ENCODE measurements at regions of chr18 and their contacts with region 1.

Region 1: DNA sequence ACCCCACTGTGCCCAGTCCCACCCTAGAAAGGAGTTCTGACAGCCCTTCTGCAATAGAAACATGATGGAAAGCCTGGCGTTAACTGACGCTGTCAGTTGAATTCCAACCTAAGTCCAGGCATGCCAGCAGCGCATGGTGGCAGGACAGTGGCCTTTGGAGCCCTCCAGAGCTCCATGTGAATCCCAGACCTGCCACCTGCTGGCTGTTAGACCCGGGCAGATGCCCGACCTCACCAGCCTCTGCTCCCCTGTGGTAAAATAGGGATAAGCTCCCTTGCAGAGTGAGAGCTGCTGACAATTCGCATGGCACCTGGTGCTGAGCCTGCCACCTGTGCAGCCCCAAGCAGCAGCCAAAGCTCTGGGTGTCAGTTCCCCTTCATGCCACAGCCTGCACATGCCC is 138.6 kb downstream of the LOXHD1 start:
- DNase-seq: peak; percentile 61
- H3K4me3 ChIP-seq: no peak overlapping the region
- H3K27ac ChIP-seq: no peak overlapping the region
- H3K4me1 ChIP-seq: no peaks in the 10 kb centered on the region
- H3K27me3 ChIP-seq: no peaks in the 10 kb centered on the region
- CTCF ChIP-seq: peak; percentile 22; the same call in 1 of the 2 replicates
- EP300 ChIP-seq: no peak
- RAD21 ChIP-seq: peak; percentile 72

Region 2: DNA sequence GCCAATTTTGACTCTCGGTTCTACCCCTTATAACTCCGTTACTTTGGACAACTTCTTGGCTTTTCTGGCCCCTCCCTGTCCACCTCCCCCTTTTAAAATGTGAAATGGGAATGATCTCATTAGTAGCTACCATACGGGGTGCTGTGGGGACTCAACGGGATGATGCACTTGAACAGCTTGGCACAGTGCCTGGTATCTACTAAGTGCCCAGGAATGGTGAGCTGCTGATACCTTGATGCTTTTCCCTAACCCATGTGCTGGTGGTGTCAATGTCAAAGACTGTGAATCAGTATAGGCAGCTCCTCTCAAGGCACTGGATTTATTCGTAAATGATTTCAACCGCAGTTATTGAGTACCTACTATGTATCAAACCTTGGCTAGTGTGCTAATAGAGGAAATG is 65.6 kb before region 1 on chr18:
- CTCF ChIA-PET with region 1: no interaction called
- POLR2A ChIA-PET with region 1: no interaction called
- DNase-seq: no peak
- H3K4me3 ChIP-seq: no peak overlapping the region
- H3K27ac ChIP-seq: no peak overlapping the region
- H3K4me1 ChIP-seq: no peaks in the 10 kb centered on the region
- H3K27me3 ChIP-seq: no peaks in the 10 kb centered on the region
- CTCF ChIP-seq: no peak
- EP300 ChIP-seq: no peak
- RAD21 ChIP-seq: no peak

Region 3: DNA sequence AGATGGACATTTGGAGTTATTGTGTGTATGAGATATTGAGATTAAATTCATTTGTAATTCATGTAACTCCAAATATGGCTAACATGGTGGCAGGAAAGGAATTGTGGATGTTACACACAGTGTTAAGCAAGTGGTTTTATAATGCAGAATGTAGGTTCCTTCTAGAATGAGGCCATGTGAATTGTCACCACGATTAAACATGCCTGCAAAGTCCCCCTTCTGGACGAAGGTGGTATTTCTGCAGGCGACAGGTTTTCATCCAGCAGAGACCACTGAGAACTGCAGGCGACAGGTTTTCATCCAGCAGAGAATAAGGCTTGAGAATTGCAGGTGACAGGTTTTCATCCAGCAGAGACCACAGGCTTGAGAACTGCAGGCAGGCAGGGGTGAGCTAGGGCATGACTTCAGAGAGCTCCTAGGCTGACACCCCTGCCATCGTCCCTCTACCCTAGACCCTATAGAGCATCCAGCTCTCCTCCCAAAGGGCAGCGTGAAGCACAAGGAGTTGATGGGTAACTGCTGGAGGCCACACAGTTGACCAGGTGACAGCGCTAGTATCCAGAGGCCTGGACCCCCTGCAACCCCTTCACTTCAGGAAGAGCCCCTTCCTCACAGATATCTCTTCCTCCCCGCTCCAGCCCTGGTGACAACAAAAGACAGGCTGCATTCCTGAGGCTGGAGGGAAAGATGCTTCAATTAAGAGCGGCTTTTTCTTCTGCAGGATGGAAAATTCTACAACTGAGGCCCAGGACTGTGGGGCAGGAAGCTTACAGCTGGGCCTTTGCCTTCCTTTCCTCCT is 37.2 kb before region 1 on chr18:
- CTCF ChIA-PET with region 1: interaction called, 11 read pairs
- POLR2A ChIA-PET with region 1: no interaction called
- DNase-seq: peak; percentile 64
- H3K4me3 ChIP-seq: no peak overlapping the region
- H3K27ac ChIP-seq: peak overlapping the region in 1 of 2 experiments; percentile 59; a peak in 2 of 4 replicates
- H3K4me1 ChIP-seq: peaks cover 7 to 9% of the 10 kb centered on the region in 2 experiments; a peak in 2 of 4 replicates
- H3K27me3 ChIP-seq: no peaks in the 10 kb centered on the region; the same call in 1 of the 2 replicates
- CTCF ChIP-seq: peak; percentile 67
- EP300 ChIP-seq: no peak
- RAD21 ChIP-seq: peak; percentile 77

Region 4: DNA sequence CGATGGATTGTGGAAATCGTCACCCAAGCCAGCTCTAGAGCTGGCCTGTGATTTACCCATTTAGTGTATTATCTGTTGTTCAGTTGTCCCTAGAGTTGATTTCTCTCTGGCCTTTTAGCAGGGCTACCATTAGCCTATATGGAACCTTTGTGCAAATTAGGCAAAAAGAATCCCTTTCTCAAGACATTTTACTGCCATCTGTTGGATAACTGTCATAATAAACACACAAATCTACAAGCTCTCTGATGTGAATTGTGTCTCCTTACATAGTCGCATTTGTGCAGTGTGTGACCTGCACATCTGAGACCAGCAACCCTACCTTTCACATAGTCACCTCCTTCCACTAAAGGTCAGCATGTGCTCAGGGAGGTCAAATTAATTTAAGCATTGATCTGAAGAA is 104.6 kb after region 1 on chr18:
- CTCF ChIA-PET with region 1: interaction called, 10 read pairs
- POLR2A ChIA-PET with region 1: no interaction called
- DNase-seq: peak; percentile 27
- H3K4me3 ChIP-seq: no peak overlapping the region
- H3K27ac ChIP-seq: peak overlapping the region in 1 of 2 experiments; percentile 86; a peak in 2 of 4 replicates
- H3K4me1 ChIP-seq: peaks cover 0 to 26% of the 10 kb centered on the region in 2 experiments; a peak in 2 of 4 replicates
- H3K27me3 ChIP-seq: no peaks in the 10 kb centered on the region
- CTCF ChIP-seq: peak; percentile 37
- EP300 ChIP-seq: no peak
- RAD21 ChIP-seq: peak; percentile 63

Measured in SK-N-SH (cell line).